Endothelial cell of umbilical vein (primary cell): ENCODE measurements at regions of chr12 and their contacts with region 1.

Region 1: GRCh38 chr12:9707864-9708808 is 24.8 kb downstream of the CLECL1 start:
- DNase-seq: peak; percentile 63
- H3K4me3 ChIP-seq: no peak overlapping the region
- H3K27ac ChIP-seq: no peak overlapping the region
- H3K4me1 ChIP-seq: no peaks in the 10 kb centered on the region
- H3K27me3 ChIP-seq: no peaks in the 10 kb centered on the region
- CTCF ChIP-seq: peak; percentile 77 to 78
- POLR2A ChIP-seq: no peak

Region 2: GRCh38 chr12:9331218-9331626 is 376.9 kb before region 1 on chr12:
- CTCF ChIA-PET with region 1: interaction called, 8 read pairs
- POLR2A ChIA-PET with region 1: no interaction called
- dilution Hi-C with region 1: no loop called
- intact Hi-C with region 1: loop called (anchors 1 kb)
- DNase-seq: peak; percentile 53
- H3K4me3 ChIP-seq: no peak overlapping the region
- H3K27ac ChIP-seq: no peak overlapping the region
- H3K4me1 ChIP-seq: no peaks in the 10 kb centered on the region
- H3K27me3 ChIP-seq: no peaks in the 10 kb centered on the region
- CTCF ChIP-seq: peak; percentile 94 to 95
- POLR2A ChIP-seq: no peak

Region 3: DNA sequence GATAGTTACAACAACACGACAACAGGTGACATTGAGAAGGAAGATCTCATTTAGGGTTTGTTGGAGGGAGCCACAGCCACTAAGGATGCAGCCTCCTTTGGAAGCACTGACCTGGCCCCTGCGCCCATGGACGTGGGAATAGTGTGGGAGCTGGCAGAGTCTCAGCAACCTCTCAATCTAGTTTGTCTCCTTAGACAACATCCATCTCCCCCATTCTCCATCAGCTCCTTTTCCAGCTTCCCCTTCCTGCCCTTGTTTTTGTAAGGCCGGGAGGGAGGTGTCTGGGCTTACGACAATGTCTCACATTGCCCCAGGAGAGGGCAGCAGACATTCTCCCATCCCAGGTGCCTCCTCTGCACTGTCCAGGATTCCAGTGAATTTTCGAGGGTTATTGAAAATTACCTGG is 329.7 kb before region 1 on chr12:
- CTCF ChIA-PET with region 1: no interaction called
- POLR2A ChIA-PET with region 1: no interaction called
- dilution Hi-C with region 1: no loop called
- intact Hi-C with region 1: loop called (anchors 5 kb)
- DNase-seq: peak; percentile 49
- H3K4me3 ChIP-seq: no peak overlapping the region
- H3K27ac ChIP-seq: no peak overlapping the region
- H3K4me1 ChIP-seq: no peaks in the 10 kb centered on the region
- H3K27me3 ChIP-seq: no peaks in the 10 kb centered on the region
- CTCF ChIP-seq: peak in 1 of 2 donors; percentile 59
- POLR2A ChIP-seq: no peak

Region 4: DNA sequence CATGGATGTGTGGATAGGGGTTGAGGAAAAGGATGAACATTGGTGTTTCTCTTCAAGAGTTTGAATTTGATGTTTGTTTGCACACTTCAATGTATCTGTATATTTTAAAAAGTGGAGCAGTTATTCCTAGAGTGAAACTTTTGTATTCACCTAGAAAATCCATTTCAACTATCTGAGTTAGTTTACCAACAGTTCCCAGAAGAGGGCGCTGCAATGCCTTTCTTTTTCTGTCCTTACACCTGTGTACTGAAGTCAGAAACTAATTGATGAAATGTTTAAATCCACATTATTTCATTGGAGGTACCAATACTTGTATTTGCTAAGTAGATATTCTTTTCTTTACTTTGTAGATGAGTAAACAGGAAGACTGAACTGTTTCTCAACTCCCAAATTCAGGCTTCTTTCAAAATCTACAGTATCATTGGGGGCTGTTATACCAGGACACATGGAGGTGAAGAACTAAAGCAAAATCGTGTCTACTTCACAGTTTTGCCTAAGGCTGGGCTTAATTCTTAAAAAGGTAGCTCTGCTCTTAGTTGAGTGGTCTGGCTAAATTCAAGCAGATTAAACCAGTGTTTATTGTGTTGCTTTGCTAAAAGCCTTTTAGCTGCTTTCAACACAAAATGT is 73.8 kb before region 1 on chr12:
- CTCF ChIA-PET with region 1: interaction called, 132 read pairs
- POLR2A ChIA-PET with region 1: no interaction called
- dilution Hi-C with region 1: no loop called
- intact Hi-C with region 1: loop called (anchors 1 kb)
- DNase-seq: peak; percentile 70
- H3K4me3 ChIP-seq: no peak overlapping the region
- H3K27ac ChIP-seq: no peak overlapping the region
- H3K4me1 ChIP-seq: no peaks in the 10 kb centered on the region
- H3K27me3 ChIP-seq: no peaks in the 10 kb centered on the region
- CTCF ChIP-seq: peak; percentile 55 to 57
- POLR2A ChIP-seq: no peak

Region 5: GRCh38 chr12:9647825-9648700 is 60.1 kb before region 1 on chr12:
- CTCF ChIA-PET with region 1: interaction called, 22 read pairs
- POLR2A ChIA-PET with region 1: no interaction called
- dilution Hi-C with region 1: no loop called
- intact Hi-C with region 1: no loop called
- DNase-seq: peak; percentile 54
- H3K4me3 ChIP-seq: peak overlapping the region; percentile 57 to 91 (median 85)
- H3K27ac ChIP-seq: peak overlapping the region; percentile 72
- H3K4me1 ChIP-seq: peaks cover 40% of the 10 kb centered on the region
- H3K27me3 ChIP-seq: no peaks in the 10 kb centered on the region
- CTCF ChIP-seq: no peak
- POLR2A ChIP-seq: peak; percentile 50

Region 6: GRCh38 chr12:9687228-9687627 is 20.9 kb before region 1 on chr12:
- CTCF ChIA-PET with region 1: interaction called, 13 read pairs
- POLR2A ChIA-PET with region 1: no interaction called
- dilution Hi-C with region 1: no loop called
- intact Hi-C with region 1: no loop called
- DNase-seq: no peak
- H3K4me3 ChIP-seq: no peak overlapping the region
- H3K27ac ChIP-seq: no peak overlapping the region
- H3K4me1 ChIP-seq: no peaks in the 10 kb centered on the region
- H3K27me3 ChIP-seq: no peaks in the 10 kb centered on the region
- CTCF ChIP-seq: no peak
- POLR2A ChIP-seq: no peak

Region 7: GRCh38 chr12:9721394-9722092 is 13.4 kb after region 1 on chr12:
- CTCF ChIA-PET with region 1: interaction called, 25 read pairs
- POLR2A ChIA-PET with region 1: no interaction called
- dilution Hi-C with region 1: no loop called
- intact Hi-C with region 1: no loop called
- DNase-seq: peak; percentile 76
- H3K4me3 ChIP-seq: peak overlapping the region in 1 of 3 experiments; percentile 6
- H3K27ac ChIP-seq: peak overlapping the region; percentile 82
- H3K4me1 ChIP-seq: peaks cover 23% of the 10 kb centered on the region
- H3K27me3 ChIP-seq: no peaks in the 10 kb centered on the region
- CTCF ChIP-seq: no peak
- POLR2A ChIP-seq: no peak

Region 8: DNA sequence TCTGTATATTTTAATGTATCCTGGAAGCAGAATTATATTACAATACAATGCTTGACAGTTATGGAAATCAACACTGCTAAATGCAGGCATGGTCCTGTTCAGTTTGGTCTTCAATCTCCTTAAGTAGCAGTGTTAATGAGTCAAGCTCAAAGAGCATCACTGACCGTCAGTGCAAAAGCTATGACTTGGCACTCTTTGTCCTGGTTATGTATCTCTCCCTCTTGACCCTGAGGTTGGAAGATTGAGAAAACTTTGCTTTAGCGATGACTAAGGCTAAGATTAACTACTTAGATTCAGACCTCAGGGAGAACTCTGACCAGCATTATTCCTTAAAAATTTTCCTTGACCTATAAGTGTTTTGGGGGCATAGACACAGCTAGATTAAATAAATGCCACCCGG is 410.9 kb after region 1 on chr12:
- CTCF ChIA-PET with region 1: no interaction called
- POLR2A ChIA-PET with region 1: no interaction called
- dilution Hi-C with region 1: no loop called
- intact Hi-C with region 1: no loop called
- DNase-seq: no peak
- H3K4me3 ChIP-seq: no peak overlapping the region
- H3K27ac ChIP-seq: no peak overlapping the region
- H3K4me1 ChIP-seq: no peaks in the 10 kb centered on the region
- H3K27me3 ChIP-seq: no peaks in the 10 kb centered on the region
- CTCF ChIP-seq: no peak
- POLR2A ChIP-seq: no peak